Prostate gland (tissue), 2 donors: ENCODE measurements at regions of chr1 and their contacts with region 1.

Region 1: GRCh38 chr1:229558571-229559335 is at the start of gene ABCB10:
- DNase-seq: peak; percentile 94
- H3K4me3 ChIP-seq: peak within 1 kb of the TSS; percentile 86
- H3K27ac ChIP-seq: peak within 1 kb of the TSS; percentile 84 to 92
- H3K4me1 ChIP-seq: no peaks in the 10 kb centered on the region
- H3K27me3 ChIP-seq: no peaks in the 10 kb centered on the region
- CTCF ChIP-seq: peak; percentile 64 to 86 (median 76)
- POLR2A ChIP-seq: peak; percentile 32
- total RNA-seq, gene ABCB10: 11.0 to 21.9 TPM

Region 2: DNA sequence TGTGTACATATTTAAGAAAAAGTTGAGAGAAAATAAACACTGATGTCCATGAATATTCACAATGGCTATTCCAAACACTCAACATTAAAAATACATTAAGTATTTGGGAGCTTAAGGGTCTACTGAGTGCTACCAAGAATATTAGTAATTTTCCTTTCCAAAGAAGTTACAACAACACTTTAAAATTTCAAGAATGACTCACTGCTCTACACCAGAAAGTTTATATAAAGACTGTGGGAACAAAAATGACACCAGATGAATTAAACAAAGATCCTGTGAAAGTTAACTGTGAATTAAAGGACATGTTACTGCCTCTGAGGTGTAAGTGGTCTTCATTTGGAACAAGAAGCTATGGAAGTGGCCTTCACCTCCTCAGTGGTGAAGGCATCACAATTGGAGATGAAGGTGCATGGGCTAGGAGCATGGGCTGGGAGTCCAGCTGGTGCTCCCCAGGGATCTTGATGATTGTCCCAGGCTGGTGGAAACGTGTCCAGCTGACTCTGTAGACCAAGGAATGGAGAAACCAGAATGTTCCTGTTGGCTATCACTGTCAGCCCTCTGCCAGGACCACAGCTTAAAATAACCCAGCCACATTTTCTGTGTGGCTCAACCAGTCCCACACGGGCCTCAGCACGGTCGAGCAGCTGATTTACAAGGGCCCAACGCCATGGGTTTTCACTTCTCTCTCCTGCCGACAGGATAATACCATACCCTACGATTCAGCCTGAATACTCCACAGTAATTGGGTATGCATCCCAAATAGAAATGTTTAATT is 38.4 kb after region 1 on chr1:
- intact Hi-C with region 1: loop called (anchors 5 kb)
- DNase-seq: no peak
- H3K4me3 ChIP-seq: no peak overlapping the region
- H3K27ac ChIP-seq: peak overlapping the region; percentile 36 to 41
- H3K4me1 ChIP-seq: no peaks in the 10 kb centered on the region
- H3K27me3 ChIP-seq: no peaks in the 10 kb centered on the region
- CTCF ChIP-seq: no peak
- POLR2A ChIP-seq: no peak

Region 3: GRCh38 chr1:229625915-229626831 is 67.4 kb after region 1 on chr1 and contains the starts of genes TAF5L and URB2:
- intact Hi-C with region 1: loop called (anchors 2 kb)
- DNase-seq: peak; percentile 83
- H3K4me3 ChIP-seq: peak within 1 kb of the TSS; percentile 90 to 94
- H3K27ac ChIP-seq: peak within 1 kb of the TSS; percentile 81 to 92
- H3K4me1 ChIP-seq: peaks cover 4% of the 10 kb centered on the region
- H3K27me3 ChIP-seq: no peaks in the 10 kb centered on the region
- CTCF ChIP-seq: peak in 3 of 4 experiments; percentile 8 to 32 (median 9)
- POLR2A ChIP-seq: peak; percentile 46
- total RNA-seq, gene TAF5L: 14.0 to 17.2 TPM
- total RNA-seq, gene URB2: 5.6 to 11.9 TPM